ENCODE measurements at regions of chr1 and their contacts with region 1.

Region 1: GRCh38 chr1:8702850-8703810 is 114.3 kb downstream of the RERE start:
- DNase-seq: peak; percentile 92
- H3K4me3 Mint-ChIP-seq: peak overlapping the region; percentile 89
- H3K27ac Mint-ChIP-seq: peak overlapping the region; percentile 84
- H3K4me1 Mint-ChIP-seq: peaks cover 40% of the 10 kb centered on the region
- H3K27me3 Mint-ChIP-seq: peaks cover 5% of the 10 kb centered on the region

Region 2: GRCh38 chr1:8423650-8424538 is 279.2 kb before region 1 on chr1:
- intact Hi-C with region 1: loop called (anchors 5 kb)
- DNase-seq: peak; percentile 83
- H3K4me3 Mint-ChIP-seq: peak overlapping the region; percentile 86
- H3K27ac Mint-ChIP-seq: peak overlapping the region; percentile 90
- H3K4me1 Mint-ChIP-seq: peaks cover 40% of the 10 kb centered on the region
- H3K27me3 Mint-ChIP-seq: no peaks in the 10 kb centered on the region

Region 3: DNA sequence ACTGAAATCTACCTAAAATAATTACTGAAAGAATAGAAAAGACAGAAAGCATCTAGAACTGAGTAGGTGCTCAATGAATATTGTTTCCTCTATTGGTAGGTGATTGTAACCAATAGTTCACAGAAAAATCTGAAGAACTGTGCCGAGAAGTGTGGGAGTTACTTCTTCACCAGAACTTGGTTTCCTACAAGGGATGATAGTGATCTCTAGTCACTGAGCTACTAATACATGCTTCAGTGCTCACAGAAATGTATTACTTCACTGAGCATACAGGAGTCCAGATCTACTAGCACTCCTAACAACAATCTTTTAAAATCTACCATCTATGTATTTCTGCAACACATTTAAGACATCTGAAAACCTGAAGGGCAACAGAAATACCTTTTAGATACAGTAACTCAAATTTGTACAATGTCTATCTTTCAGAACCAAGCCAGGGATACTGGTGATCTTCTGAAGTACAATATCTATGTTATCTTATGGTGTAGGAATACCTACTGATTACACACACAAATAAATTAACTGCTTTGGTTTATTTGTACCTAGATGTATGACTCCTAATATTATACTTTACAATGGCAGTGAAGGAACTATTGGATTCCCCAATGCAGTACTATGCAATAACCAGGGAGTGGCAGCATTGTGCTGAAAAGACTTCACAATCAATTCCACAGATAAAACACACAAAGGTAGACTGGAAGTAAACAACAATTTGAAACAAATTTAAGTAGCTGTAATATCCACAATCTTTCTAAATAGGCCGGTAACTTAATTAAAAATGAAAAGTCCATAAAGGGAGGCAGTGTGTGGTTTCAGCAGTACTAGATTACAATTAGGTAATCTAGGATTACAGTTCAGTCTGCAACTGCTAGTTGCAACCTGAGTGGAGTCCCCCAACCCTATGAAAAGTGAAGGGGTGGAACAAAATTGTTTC is 142.3 kb before region 1 on chr1:
- intact Hi-C with region 1: loop called (anchors 1 kb)
- DNase-seq: peak; percentile 78
- H3K4me3 Mint-ChIP-seq: peak overlapping the region; percentile 60
- H3K27ac Mint-ChIP-seq: peak overlapping the region; percentile 87
- H3K4me1 Mint-ChIP-seq: peaks cover 33% of the 10 kb centered on the region
- H3K27me3 Mint-ChIP-seq: no peaks in the 10 kb centered on the region

Region 4: GRCh38 chr1:8671306-8671917 is 31.7 kb before region 1 on chr1:
- intact Hi-C with region 1: loop called (anchors 2 kb)
- DNase-seq: peak; percentile 75
- H3K4me3 Mint-ChIP-seq: no peak overlapping the region
- H3K27ac Mint-ChIP-seq: no peak overlapping the region
- H3K4me1 Mint-ChIP-seq: peaks cover 40% of the 10 kb centered on the region
- H3K27me3 Mint-ChIP-seq: no peaks in the 10 kb centered on the region

Region 5: GRCh38 chr1:8687039-8687438 is 16.1 kb before region 1 on chr1:
- intact Hi-C with region 1: loop called (anchors 2 kb)
- DNase-seq: no peak
- H3K4me3 Mint-ChIP-seq: peak overlapping the region; percentile 1
- H3K27ac Mint-ChIP-seq: no peak overlapping the region
- H3K4me1 Mint-ChIP-seq: peaks cover 39% of the 10 kb centered on the region
- H3K27me3 Mint-ChIP-seq: no peaks in the 10 kb centered on the region

Region 6: DNA sequence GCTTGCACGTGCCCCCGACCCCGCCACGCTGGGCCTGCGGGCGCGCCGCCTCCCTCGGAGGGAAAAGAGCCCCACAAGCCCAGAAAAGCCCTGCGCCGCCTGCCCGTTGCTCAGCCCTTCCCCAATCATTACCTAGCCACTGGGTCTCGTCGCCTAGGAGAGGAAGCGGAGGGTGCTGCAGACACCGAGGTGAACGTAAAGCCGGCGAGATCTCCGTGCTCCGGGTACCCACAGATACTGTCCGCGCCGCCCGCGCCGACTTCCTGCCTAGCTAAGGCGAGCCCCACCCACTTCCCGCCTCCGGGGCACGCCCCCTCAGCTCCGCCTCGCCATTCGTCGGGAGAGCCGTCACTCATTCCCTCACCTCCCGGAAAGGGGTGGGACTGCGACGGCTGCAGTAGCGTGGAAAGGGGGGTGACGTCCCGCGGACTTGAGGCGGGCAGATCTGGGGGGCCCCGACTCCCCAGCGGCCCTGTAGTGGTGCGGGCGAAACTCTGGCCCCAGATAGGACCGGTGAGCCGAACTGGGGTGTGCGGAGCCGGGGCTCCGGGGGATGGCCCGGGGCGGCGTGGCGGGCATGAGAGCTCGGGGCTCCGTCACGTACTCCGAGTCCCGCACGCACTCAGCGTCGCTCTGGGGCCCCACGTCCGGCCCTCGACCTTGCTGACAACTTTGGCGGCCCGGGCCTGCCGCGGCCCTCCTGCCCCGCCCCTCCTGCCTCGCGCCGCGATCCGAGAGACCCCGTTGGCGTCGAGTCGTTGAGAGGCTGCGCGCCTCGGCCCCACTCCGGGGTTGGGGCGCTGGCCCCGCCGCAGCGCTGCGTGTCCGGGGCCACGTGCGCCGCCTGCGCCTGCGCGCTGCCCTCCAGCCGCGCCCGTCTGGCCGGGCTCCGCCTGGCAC is 175.6 kb after region 1 on chr1 and contains the start of gene ENO1:
- intact Hi-C with region 1: loop called (anchors 5 kb)
- DNase-seq: peak; percentile 100
- H3K4me3 Mint-ChIP-seq: peak within 1 kb of the TSS; percentile 92
- H3K27ac Mint-ChIP-seq: peak within 1 kb of the TSS; percentile 100
- H3K4me1 Mint-ChIP-seq: peaks cover 30% of the 10 kb centered on the region
- H3K27me3 Mint-ChIP-seq: no peaks in the 10 kb centered on the region
- total RNA-seq, gene ENO1: 3,899 and 3,999 TPM in 2 replicates